ENCODE measurements at regions of chrX and their contacts with region 1.

Region 1: DNA sequence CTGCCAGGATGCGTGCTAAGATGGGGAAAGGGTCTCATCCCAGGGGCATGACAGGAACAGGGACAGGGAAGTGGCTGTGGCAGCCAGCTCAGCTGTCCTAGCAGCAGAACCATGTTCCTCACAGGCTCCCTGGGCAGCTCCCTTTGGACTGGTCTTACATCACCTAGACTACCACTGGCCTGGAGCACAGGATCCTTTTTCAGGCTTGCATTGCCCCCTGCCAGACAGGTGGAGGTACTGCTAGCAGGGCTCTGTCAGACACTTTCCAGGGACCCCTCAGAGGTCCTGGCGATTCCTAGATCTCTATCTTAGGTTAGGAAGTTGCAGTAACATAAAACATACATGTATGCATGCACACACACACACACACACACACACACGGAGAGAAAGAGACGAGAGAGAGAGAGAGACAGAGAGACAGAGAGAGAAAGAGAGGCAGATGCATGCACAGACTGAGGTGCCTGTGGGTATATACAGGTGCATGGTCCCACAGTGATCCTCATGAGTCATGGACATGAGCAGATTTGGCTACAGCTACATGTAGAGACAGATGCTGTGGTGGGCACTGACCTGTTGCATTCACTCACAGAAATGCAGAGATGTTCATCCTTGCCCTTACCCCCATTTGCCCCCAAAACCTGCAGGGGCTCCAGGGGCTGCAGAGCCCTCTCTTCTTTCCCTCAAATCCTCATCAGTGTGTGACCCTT is 63.6 kb downstream of the STARD8 start:
- DNase-seq: peak in 5 of 7 donors; percentile 36 to 57 (median 48)
- H3K4me3 ChIP-seq: no peak overlapping the region
- H3K27ac ChIP-seq: no peak overlapping the region
- H3K4me1 ChIP-seq: no peaks in the 10 kb centered on the region
- H3K27me3 ChIP-seq: peaks cover 9% of the 10 kb centered on the region
- CTCF ChIP-seq: peak; percentile 21 to 64 (median 50)
- POLR2A ChIP-seq: no peak

Region 2: GRCh38 chrX:68504237-68504636 is 206.8 kb before region 1 on chrX:
- intact Hi-C with region 1: loop called in 1 of 2 experiments (anchors 10 kb)
- DNase-seq: no peak
- H3K4me3 ChIP-seq: no peak overlapping the region
- H3K27ac ChIP-seq: no peak overlapping the region
- H3K4me1 ChIP-seq: peaks cover 0 to 16% of the 10 kb centered on the region in 2 donors
- H3K27me3 ChIP-seq: peaks cover 5% of the 10 kb centered on the region
- CTCF ChIP-seq: no peak
- POLR2A ChIP-seq: no peak

Region 3: GRCh38 chrX:69165087-69165651 is 454.1 kb after region 1 on chrX and contains the start of gene PJA1:
- intact Hi-C with region 1: no loop called
- DNase-seq: peak; percentile 63 to 80 (median 67)
- H3K4me3 ChIP-seq: peak within 1 kb of the TSS in 3 of 4 donors; percentile 34 to 60 (median 48)
- H3K27ac ChIP-seq: peak within 1 kb of the TSS in 4 of 5 donors; percentile 22 to 78 (median 46)
- H3K4me1 ChIP-seq: no peaks in the 10 kb centered on the region
- H3K27me3 ChIP-seq: no peaks in the 10 kb centered on the region
- CTCF ChIP-seq: no peak
- POLR2A ChIP-seq: peak; percentile 47 to 54
- total RNA-seq, gene PJA1: 16.7 to 49.6 (median 25.3) TPM